Activated CD8-positive, alpha-beta T cell treated with anti-CD3 and anti-CD28 coated beads, Interleukin-2, amount 10 ng/mL, durations not matched to agents 7 days and 5 days (primary cell): ENCODE measurements at regions of chr1 and their contacts with region 1.

Region 1: GRCh38 chr1:226882631-226883409 is 12.4 kb downstream of the PSEN2 start:
- DNase-seq: peak; percentile 52
- ATAC-seq: peak; percentile 85
- H3K4me3 Mint-ChIP-seq: peak overlapping the region; percentile 51
- H3K27ac Mint-ChIP-seq: peak overlapping the region; percentile 86
- H3K4me1 Mint-ChIP-seq: peaks cover 46% of the 10 kb centered on the region
- H3K27me3 Mint-ChIP-seq: no peaks in the 10 kb centered on the region

Region 2: GRCh38 chr1:226870401-226871279 is 12.2 kb before region 1 on chr1 and contains the start of gene PSEN2:
- CTCF ChIA-PET with region 1: interaction called, 5 read pairs
- POLR2A ChIA-PET with region 1: interaction called, 10 read pairs
- DNase-seq: peak; percentile 66
- ATAC-seq: peak; percentile 95
- H3K4me3 Mint-ChIP-seq: peak within 1 kb of the TSS; percentile 75
- H3K27ac Mint-ChIP-seq: peak within 1 kb of the TSS; percentile 56
- H3K4me1 Mint-ChIP-seq: peaks cover 11% of the 10 kb centered on the region
- H3K27me3 Mint-ChIP-seq: peaks cover 23% of the 10 kb centered on the region
- total RNA-seq, gene PSEN2: 3.0 to 3.6 TPM

Region 3: GRCh38 chr1:226940029-226940805 is 57.4 kb after region 1 on chr1 and contains the start of gene COQ8A:
- CTCF ChIA-PET with region 1: no interaction called
- POLR2A ChIA-PET with region 1: interaction called, 26 read pairs
- DNase-seq: peak; percentile 99
- ATAC-seq: peak; percentile 97
- H3K4me3 Mint-ChIP-seq: peak within 1 kb of the TSS; percentile 84
- H3K27ac Mint-ChIP-seq: peak within 1 kb of the TSS; percentile 96
- H3K4me1 Mint-ChIP-seq: peaks cover 25% of the 10 kb centered on the region
- H3K27me3 Mint-ChIP-seq: no peaks in the 10 kb centered on the region
- total RNA-seq, gene COQ8A: 12.1 to 16.4 TPM